HepG2 (cell line): ENCODE measurements at regions of chr5 and their contacts with region 1.

Region 1: GRCh38 chr5:149667084-149667828 is 62.9 kb upstream of the PPARGC1B start:
- DNase-seq: peak; percentile 25
- ATAC-seq: peak; percentile 57; the same call in 2 of the 3 replicates
- H3K4me3 ChIP-seq: no peak overlapping the region
- H3K27ac ChIP-seq: no peak overlapping the region
- H3K4me1 ChIP-seq: no peaks in the 10 kb centered on the region
- H3K27me3 ChIP-seq: no peaks in the 10 kb centered on the region
- CTCF ChIP-seq: peak; percentile 66
- EP300 ChIP-seq: no peak
- POLR2A ChIP-seq: no peak
- RAD21 ChIP-seq: no peak

Region 2: DNA sequence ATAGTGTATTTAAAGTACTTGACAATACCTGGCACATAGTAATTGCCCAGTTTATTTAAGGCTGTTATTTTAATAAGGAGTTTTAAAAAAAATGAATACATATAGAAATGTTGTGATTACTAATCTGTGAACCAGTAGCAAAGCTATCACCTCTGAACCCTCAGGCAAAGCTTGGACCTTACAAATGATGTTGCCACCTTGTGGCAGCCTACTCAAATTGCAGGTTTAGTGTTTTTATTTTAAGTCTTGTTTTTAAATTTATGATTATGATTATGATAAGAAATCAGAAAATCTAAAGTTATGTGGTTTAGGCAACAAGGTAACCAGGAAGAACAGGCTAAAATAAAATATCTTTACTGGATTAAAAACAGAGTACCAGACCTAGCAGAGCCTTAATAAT is 98.7 kb after region 1 on chr5:
- CTCF ChIA-PET with region 1: interaction called, 5 read pairs
- POLR2A ChIA-PET with region 1: no interaction called
- in situ Hi-C with region 1: no loop called
- intact Hi-C with region 1: loop called (anchors 5 kb)
- DNase-seq: no peak
- ATAC-seq: no peak
- H3K4me3 ChIP-seq: no peak overlapping the region
- H3K27ac ChIP-seq: no peak overlapping the region
- H3K4me1 ChIP-seq: no peaks in the 10 kb centered on the region
- H3K27me3 ChIP-seq: no peaks in the 10 kb centered on the region
- CTCF ChIP-seq: 0 out of 2 replicates have a peak, but pooled peaks have one; percentile 27
- EP300 ChIP-seq: no peak
- POLR2A ChIP-seq: no peak
- RAD21 ChIP-seq: no peak

Region 3: DNA sequence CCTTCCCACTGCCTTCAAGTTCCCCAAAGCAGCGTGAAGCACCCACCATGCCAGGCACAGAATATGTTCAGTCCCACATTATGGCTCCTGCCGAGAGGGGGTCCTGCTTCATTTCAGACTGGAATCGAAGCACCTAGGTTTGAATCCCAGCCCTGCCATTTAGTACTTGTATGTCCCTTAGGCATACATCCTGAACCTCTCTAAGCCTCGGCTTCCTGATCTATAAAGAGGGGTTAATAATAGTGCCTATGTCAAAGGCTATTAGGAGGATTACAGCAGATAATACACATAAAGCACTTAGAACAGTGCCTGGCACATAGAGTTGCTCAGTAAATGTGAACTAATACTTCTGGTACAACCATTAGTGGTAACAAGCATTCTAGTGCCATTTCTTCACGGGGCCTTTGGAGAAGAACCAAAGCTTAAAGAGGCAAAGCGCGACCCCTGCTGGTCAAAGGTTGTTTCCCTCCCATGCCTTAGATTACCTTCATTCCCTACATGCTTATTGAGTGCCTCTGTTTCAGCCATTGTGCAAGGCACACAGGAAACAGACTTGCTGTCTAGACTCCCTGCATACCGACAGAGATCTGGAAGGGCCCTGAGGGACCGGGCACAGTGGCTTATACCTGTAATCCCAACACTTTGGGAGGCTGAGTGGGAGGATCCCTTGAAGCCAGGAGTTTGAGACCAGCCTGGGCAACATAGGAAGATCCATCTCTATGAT is 161.1 kb after region 1 on chr5:
- CTCF ChIA-PET with region 1: interaction called, 17 read pairs
- POLR2A ChIA-PET with region 1: no interaction called
- in situ Hi-C with region 1: no loop called
- intact Hi-C with region 1: loop called (anchors 1 kb)
- DNase-seq: peak; percentile 87
- ATAC-seq: peak; percentile 97
- H3K4me3 ChIP-seq: no peak overlapping the region
- H3K27ac ChIP-seq: no peak overlapping the region
- H3K4me1 ChIP-seq: no peaks in the 10 kb centered on the region
- H3K27me3 ChIP-seq: no peaks in the 10 kb centered on the region
- CTCF ChIP-seq: peak; percentile 95
- EP300 ChIP-seq: no peak
- POLR2A ChIP-seq: no peak
- RAD21 ChIP-seq: peak; percentile 86

Region 4: DNA sequence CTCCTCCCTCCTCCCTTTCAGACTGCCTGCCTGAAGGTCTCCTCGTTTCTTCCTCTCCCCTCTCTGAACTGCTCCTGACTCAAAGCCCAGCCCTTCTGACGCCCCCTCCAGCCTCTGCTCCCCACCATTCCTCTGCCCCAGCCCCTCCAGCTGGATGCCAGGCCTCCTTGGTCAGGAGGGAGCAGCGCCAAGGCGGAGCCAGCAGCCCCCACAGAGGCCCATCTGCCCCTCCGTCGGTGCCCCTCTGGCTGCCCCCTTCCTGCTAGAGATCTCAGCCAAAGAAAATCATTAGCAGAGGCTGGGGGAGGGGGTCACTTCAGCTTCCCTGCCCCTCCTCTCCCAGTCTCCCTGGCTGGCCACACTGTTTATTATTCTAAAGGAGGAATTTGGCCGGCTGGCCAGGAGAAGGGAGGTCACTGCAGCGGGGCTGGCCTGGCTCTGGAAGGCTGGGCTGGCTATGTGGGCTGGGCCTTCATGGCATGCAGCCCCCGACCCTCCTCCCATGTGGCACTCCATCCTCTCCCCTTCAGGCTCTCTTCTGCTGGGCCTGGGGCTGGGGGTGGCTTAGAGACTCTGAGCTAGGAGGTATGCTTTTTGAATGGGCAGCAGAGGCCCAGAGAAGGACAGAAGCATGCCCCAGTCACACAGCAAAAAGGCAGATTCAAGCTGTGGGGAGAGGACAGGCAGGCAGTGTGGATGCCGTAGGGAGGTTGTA is 471.5 kb after region 1 on chr5:
- CTCF ChIA-PET with region 1: no interaction called
- POLR2A ChIA-PET with region 1: no interaction called
- in situ Hi-C with region 1: no loop called
- intact Hi-C with region 1: no loop called
- DNase-seq: peak; percentile 89
- ATAC-seq: peak; percentile 62
- H3K4me3 ChIP-seq: peak overlapping the region; percentile 48 to 76 (median 64)
- H3K27ac ChIP-seq: peak overlapping the region; percentile 91
- H3K4me1 ChIP-seq: peaks cover 97% of the 10 kb centered on the region
- H3K27me3 ChIP-seq: no peaks in the 10 kb centered on the region
- CTCF ChIP-seq: no peak
- EP300 ChIP-seq: no peak; a peak in 1 of 4 replicates
- POLR2A ChIP-seq: no peak
- RAD21 ChIP-seq: no peak